Heart right ventricle (tissue), 16 donors: ENCODE measurements at regions of chr16 and their contacts with region 1.

Region 1: GRCh38 chr16:15777533-15778203 is 79.2 kb downstream of the MYH11 start:
- DNase-seq: no peak
- ATAC-seq: peak in 3 of 8 donors; percentile 47 to 72 (median 55)
- H3K4me3 ChIP-seq: no peak overlapping the region
- H3K27ac ChIP-seq: no peak overlapping the region
- H3K4me1 ChIP-seq: no peaks in the 10 kb centered on the region
- H3K27me3 ChIP-seq: peaks cover 0 to 15% (median 7%) of the 10 kb centered on the region in 7 donors
- CTCF ChIP-seq: peak in 8 of 9 donors; percentile 7 to 54 (median 34)

Region 2: GRCh38 chr16:15817446-15817845 is 39.8 kb after region 1 on chr16:
- intact Hi-C with region 1: loop called in 3 of 10 experiments (anchors 5 to 10 kb)
- DNase-seq: no peak
- ATAC-seq: no peak
- H3K4me3 ChIP-seq: no peak overlapping the region
- H3K27ac ChIP-seq: no peak overlapping the region
- H3K4me1 ChIP-seq: peaks cover 0 to 6% (median 0%) of the 10 kb centered on the region in 9 donors
- H3K27me3 ChIP-seq: peaks cover 0 to 10% (median 0%) of the 10 kb centered on the region in 7 donors
- CTCF ChIP-seq: no peak

Region 3: DNA sequence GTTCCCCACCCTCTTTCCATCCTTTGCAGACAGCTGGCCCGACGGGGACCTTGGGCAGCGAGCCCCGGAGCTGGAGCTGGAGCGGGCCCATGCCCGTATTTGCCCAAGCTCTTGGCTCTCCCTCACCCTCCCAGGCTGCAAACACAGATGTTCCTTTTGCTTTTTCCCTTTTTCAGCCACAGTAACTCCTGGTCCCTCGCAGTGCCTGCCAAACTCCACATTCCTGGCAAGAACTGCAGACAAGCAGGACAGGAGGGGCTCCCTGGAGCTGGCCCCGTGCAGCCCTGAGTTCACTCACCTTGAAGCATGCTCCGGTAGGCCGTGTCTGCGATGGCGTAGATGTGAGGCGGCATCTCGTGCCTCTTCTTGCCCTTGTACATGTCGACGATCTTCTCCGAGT is 45.3 kb after region 1 on chr16:
- intact Hi-C with region 1: loop called in 3 of 10 experiments (anchors 5 to 10 kb)
- DNase-seq: no peak
- ATAC-seq: peak in 2 of 8 donors; percentile 24 to 28
- H3K4me3 ChIP-seq: no peak overlapping the region
- H3K27ac ChIP-seq: no peak overlapping the region
- H3K4me1 ChIP-seq: no peaks in the 10 kb centered on the region
- H3K27me3 ChIP-seq: peaks cover 0 to 33% (median 0%) of the 10 kb centered on the region in 7 donors
- CTCF ChIP-seq: no peak

Region 4: GRCh38 chr16:15829460-15829859 is 51.8 kb after region 1 on chr16:
- intact Hi-C with region 1: loop called in 2 of 10 experiments (anchors 5 to 10 kb)
- DNase-seq: peak; percentile 47 to 48
- ATAC-seq: peak; percentile 61 to 89 (median 82)
- H3K4me3 ChIP-seq: no peak overlapping the region
- H3K27ac ChIP-seq: no peak overlapping the region
- H3K4me1 ChIP-seq: peaks cover 0 to 6% (median 0%) of the 10 kb centered on the region in 9 donors
- H3K27me3 ChIP-seq: peaks cover 0 to 22% (median 0%) of the 10 kb centered on the region in 7 donors
- CTCF ChIP-seq: no peak

Region 5: DNA sequence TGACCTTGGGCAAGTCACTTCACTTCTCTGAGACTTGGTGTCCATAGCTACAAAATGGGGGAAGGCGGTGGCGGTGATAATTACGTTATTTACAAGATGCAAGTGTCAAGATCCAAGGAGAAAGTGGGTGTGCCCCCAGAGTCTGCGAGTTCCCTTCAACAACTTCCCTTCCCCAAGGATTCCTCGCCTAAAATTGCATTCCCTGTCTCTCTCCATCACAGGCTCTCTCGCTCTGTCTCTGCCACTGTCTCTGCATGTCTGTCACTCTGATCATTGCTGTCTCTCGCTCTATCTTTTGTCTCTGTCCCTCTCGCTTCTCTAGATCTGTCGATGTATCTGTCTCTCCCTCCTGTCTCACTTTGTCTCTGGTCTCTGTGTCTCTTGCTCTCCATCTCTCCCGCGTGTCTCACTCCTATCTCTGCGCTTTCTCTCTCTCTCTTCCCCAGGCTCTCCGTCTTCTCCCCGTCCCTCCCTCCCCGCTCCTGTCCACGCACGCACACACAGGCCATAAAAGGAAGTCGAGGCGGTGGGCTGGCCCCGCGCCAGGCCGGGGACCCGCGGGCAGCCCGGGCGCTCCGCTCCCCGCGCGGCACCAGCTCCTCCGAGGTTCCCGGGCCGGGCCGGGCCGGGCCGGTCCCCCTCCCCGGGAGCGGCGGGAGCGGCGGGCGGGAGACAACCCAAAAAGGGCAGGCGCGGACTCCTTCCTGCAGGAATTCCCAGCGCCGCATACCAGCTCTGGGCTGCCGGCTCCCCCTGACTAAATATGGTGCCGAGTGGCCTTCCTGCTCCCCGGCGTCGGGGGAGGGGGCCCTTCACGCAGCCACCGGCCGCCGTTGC is 80.3 kb after region 1 on chr16:
- intact Hi-C with region 1: no loop called
- DNase-seq: peak; percentile 27 to 49
- ATAC-seq: peak; percentile 62 to 74 (median 67)
- H3K4me3 ChIP-seq: peak overlapping the region in 9 of 10 donors; percentile 37 to 54 (median 44)
- H3K27ac ChIP-seq: peak overlapping the region in 9 of 10 donors; percentile 2 to 79 (median 58)
- H3K4me1 ChIP-seq: peaks cover 0 to 20% (median 14%) of the 10 kb centered on the region in 9 donors
- H3K27me3 ChIP-seq: peaks cover 0 to 48% (median 28%) of the 10 kb centered on the region in 7 donors
- CTCF ChIP-seq: no peak

Region 6: DNA sequence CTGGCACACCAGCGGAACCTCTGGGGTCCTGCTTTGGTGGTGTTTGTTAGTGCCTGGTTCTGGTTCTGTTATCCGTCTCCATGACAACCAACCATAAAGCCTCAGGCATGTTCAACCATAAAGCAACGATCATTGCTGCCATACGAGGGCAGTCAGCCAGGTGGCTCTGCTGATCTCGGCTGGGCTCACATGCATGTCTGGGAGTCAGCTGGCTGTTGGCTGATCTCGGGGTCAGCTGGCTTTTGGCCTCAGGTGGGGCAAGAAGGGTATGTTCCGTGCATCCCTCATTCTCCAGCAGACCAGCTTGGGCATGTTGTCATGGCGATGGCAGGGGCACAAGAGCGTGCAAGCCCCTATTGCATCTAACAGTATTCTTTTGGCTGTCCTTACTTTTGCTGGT is 359.4 kb after region 1 on chr16:
- intact Hi-C with region 1: loop called in 1 of 10 experiments (anchors 5 kb)
- DNase-seq: no peak
- ATAC-seq: no peak
- H3K4me3 ChIP-seq: no peak overlapping the region
- H3K27ac ChIP-seq: no peak overlapping the region
- H3K4me1 ChIP-seq: no peaks in the 10 kb centered on the region
- H3K27me3 ChIP-seq: no peaks in the 10 kb centered on the region
- CTCF ChIP-seq: no peak